ENCODE measurements at regions of chr6 and their contacts with region 1.

Region 1: GRCh38 chr6:31271641-31272357 is at the start of gene HLA-C:
- DNase-seq: peak; percentile 91 to 94 (median 93)
- ATAC-seq: peak; percentile 98 to 99
- H3K4me3 ChIP-seq: peak within 1 kb of the TSS; percentile 87
- H3K27ac ChIP-seq: peak within 1 kb of the TSS; percentile 97
- H3K4me1 ChIP-seq: no peaks in the 10 kb centered on the region
- H3K27me3 ChIP-seq: no peaks in the 10 kb centered on the region
- total RNA-seq, gene HLA-C: 183 to 425 (median 325) TPM

Region 2: GRCh38 chr6:31143148-31143547 is 128.7 kb before region 1 on chr6:
- intact Hi-C with region 1: no loop called
- DNase-seq: peak; percentile 83 to 89 (median 86)
- ATAC-seq: peak; percentile 78 to 93
- H3K4me3 ChIP-seq: no peak overlapping the region
- H3K27ac ChIP-seq: peak overlapping the region; percentile 65
- H3K4me1 ChIP-seq: peaks cover 8% of the 10 kb centered on the region
- H3K27me3 ChIP-seq: no peaks in the 10 kb centered on the region

Region 3: GRCh38 chr6:31197559-31198305 is 74.1 kb before region 1 on chr6:
- intact Hi-C with region 1: loop called in 1 of 4 experiments (anchors 5 kb)
- DNase-seq: peak; percentile 93 to 97 (median 96)
- ATAC-seq: peak; percentile 93 to 94
- H3K4me3 ChIP-seq: peak overlapping the region; percentile 67
- H3K27ac ChIP-seq: peak overlapping the region; percentile 96
- H3K4me1 ChIP-seq: no peaks in the 10 kb centered on the region
- H3K27me3 ChIP-seq: no peaks in the 10 kb centered on the region

Region 4: DNA sequence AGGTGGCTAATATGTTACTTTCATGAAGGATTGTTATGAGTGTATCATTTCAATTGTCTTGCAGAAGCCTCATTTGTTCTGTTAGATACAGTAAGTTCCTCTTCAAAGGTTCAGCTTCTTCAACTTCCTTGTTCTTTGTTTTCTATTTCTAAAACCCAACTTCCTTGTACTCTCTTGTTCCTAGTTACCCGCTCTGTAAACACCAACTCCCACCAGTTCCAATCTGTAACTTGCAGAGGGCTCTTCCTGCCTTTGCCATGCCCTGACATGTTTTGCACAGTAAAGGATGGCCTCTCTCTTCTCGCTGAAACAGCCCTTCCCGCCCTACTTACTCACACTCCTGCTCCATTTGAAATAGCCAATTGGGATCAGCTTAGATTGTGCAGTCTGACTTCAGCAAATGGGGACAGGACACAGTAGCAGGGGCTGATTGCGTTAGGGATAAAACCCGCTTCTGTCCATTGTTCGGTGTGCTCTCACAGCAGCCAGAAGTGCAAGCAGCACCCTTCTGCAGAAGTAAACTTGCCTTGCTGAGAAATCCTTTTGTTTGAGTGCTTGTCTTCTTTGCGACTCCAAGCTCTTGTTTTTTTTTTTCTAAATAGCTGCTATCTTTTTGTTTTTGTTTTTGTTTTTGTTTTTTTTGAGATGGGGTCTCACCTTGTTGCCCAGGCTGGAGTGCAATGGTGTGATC is 55.4 kb before region 1 on chr6:
- intact Hi-C with region 1: no loop called
- DNase-seq: no peak
- ATAC-seq: peak in 1 of 2 donors; percentile 37
- H3K4me3 ChIP-seq: no peak overlapping the region
- H3K27ac ChIP-seq: no peak overlapping the region
- H3K4me1 ChIP-seq: no peaks in the 10 kb centered on the region
- H3K27me3 ChIP-seq: no peaks in the 10 kb centered on the region

Region 5: DNA sequence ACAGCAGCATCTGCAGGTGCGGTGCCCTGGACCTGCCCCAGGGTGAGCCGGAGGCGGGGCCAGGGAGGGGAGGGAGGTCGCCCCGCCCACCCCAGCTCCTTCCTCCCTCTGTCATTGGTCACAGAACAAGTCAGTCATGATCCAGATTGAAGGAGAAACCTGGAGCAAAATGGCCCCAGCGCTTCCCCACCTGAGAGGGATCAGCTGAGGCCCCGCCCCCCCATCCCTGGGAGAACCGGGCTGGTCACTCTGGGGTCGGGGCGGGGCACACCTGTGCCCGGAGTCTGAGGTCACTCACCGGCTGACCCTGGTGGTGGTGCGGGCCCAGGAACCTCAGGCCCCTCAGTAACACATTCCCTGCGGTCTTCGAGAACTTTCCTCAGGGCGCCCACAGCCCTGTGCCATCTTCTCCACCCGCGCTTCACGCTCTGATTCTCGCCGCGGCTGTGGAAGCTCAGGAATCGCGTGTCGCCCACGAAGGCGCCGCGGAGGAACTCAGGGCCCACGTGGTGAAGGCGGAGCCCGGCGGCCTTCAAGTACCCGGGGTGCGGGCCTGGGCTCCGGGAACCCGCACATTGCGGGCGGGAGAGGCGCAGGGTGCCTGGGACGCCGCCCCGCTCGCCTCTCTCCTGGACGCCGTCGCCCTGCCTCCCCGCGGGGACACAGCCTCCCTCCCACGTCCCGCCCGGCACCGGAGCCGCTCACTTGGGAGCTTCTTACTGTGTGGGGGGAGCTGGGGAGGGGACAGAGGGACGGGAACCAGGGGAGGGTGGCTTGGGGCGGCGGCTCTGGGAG is 36.4 kb after region 1 on chr6:
- intact Hi-C with region 1: no loop called
- DNase-seq: peak; percentile 18 to 67 (median 62)
- ATAC-seq: peak; percentile 61 to 73
- H3K4me3 ChIP-seq: no peak overlapping the region
- H3K27ac ChIP-seq: no peak overlapping the region
- H3K4me1 ChIP-seq: no peaks in the 10 kb centered on the region
- H3K27me3 ChIP-seq: no peaks in the 10 kb centered on the region

Region 6: DNA sequence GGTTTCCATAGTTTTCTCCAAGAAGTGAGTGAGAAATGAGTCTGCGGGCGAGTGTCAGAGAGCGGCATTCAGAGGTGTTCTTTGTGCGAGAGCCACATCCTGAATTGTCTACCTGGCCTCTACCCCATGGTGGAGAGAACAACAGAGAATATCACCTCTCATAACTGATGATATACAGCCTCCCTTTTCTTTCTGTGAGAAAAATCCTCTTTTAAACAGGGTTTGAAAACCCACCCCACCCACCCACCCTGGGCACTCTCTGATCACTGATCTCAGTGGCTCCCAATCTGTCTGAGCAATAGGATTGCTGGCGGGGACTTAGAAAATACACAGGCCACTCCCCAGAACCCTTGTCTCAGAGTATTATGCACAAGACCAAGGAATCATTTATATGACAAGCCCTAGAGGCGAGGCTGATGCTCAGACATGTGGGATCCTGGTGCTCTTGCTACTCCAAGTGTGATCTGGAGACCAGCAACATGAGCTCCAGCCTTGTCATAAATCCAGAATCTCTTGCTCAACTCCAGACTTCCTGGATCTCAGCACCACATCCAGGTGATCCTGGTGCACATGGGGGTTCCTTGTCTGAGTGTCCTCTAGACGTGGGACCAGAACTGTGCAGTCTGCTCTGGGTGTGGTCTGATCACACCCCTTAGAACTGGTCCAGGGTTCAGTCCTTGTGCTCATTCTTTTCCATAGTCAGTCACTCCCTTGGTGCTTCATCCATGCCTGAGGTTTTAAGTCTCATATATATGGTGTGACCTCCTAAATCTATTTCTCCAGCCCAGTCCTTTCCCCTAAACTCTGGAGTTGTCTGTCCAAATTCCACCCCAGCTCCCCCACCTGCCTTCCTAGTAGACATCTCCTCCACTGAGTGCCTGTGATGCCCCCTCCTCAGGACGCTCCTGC is 79.9 kb after region 1 on chr6:
- intact Hi-C with region 1: loop called (anchors 5 to 10 kb)
- DNase-seq: no peak
- ATAC-seq: no peak
- H3K4me3 ChIP-seq: no peak overlapping the region
- H3K27ac ChIP-seq: no peak overlapping the region
- H3K4me1 ChIP-seq: peaks cover 3% of the 10 kb centered on the region
- H3K27me3 ChIP-seq: no peaks in the 10 kb centered on the region

Region 7: DNA sequence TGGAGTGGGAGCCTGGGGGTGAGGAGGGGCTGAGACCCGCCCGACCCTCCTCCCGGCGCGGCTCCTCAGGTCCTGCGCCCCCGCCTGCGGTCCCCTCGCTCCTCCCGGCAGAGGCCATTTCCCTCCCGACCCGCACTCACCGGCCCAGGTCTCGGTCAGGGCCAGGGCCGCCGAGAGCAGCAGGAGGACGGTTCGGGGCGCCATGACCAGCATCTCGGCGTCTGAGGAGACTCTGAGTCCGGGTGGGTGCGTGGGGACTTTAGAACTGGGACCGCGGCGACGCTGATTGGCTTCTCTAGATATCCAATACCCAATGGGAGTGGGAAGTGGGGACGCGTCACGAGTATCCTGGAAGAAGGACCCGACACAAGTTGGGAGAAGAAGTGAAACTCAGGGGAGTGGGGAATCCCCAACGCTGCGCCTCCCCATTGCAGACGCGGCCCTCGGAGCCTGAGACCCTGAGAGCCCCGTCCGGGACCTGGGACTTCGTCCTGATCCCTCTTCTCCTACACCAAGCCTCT is 85.2 kb after region 1 on chr6 and contains the start of gene HLA-B:
- intact Hi-C with region 1: loop called (anchors 5 to 10 kb)
- DNase-seq: peak; percentile 88 to 96 (median 90)
- ATAC-seq: peak; percentile 96 to 97
- H3K4me3 ChIP-seq: peak within 1 kb of the TSS; percentile 73
- H3K27ac ChIP-seq: peak within 1 kb of the TSS; percentile 96
- H3K4me1 ChIP-seq: peaks cover 3% of the 10 kb centered on the region
- H3K27me3 ChIP-seq: no peaks in the 10 kb centered on the region
- total RNA-seq, gene HLA-B: 283 to 475 (median 403) TPM

Measured in right cardiac atrium (tissue), 5 donors.